Right cardiac atrium (tissue), 5 donors: ENCODE measurements at regions of chr17 and their contacts with region 1.

Region 1: DNA sequence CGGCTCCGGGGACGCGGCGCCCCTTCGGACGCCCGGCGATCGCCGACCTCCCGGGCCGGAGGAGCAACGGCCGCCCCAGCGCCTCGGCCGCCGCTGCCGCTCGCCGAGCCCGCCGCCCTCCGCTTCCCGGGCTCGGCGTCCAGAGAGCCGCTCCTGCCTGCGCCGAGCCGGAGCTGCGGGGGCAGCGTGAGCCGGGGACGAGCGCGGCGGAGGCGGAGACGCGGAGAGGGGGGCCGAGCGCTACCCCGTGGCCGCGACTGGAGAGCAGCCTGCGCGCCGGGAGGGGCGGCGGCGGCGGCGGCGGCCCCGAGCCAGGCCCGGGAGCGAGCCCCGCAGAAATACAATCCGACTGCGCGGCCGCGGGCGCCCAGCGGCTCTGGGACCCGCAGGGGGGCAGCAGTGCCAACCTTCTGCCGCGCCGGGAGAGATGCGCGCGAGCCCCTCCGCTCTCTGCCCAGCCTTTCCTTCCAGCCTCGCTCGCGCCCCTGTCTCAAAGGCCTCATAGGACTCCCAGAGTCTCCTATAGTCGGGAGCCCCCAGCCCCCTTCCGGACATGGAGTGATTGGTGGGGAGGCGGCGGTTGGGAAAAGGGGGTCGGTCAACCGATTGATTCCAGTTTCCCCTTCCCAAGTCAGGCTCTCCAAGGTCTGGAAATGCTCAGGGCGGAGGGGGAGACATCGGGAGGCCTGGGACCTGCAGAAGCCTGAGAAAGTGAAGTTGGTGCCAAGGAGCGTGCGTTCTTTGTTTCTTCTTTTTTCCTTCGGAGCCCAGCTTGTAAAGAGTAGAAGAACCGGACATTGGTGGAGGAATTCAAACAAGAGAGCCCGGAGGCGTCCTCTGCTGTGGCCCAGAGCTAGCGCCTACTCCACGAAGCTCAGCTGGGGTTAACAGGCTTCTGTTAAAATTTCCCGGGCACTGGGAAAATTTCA is 1.1 kb upstream of the SDK2 start:
- DNase-seq: peak; percentile 70 to 85 (median 82)
- ATAC-seq: peak; percentile 75 to 80
- H3K4me3 ChIP-seq: peak overlapping the region; percentile 62
- H3K27ac ChIP-seq: no peak overlapping the region
- H3K4me1 ChIP-seq: no peaks in the 10 kb centered on the region
- H3K27me3 ChIP-seq: no peaks in the 10 kb centered on the region

Region 2: DNA sequence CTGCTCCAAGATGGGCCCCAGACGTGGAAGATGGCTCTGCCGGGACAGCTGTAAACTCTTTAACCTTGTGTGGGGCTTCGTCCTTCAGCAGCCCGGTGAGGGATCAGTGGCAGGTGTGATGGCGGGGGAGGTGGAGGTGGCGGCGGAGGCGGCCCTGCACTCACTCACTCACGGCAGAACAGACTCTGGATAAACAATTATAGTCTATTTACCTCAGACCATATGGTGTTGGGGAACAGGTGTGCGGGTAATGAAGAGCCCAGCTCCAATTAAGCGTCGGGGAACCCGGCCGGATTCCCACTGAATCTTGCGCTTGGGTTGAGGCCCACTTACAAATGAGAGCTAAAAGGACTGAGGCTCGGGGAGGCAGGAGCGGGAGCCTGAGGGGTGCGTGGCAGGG is 103.2 kb after region 1 on chr17:
- intact Hi-C with region 1: no loop called
- DNase-seq: peak in 1 of 3 donors; percentile 19
- ATAC-seq: no peak
- H3K4me3 ChIP-seq: no peak overlapping the region
- H3K27ac ChIP-seq: no peak overlapping the region
- H3K4me1 ChIP-seq: no peaks in the 10 kb centered on the region
- H3K27me3 ChIP-seq: no peaks in the 10 kb centered on the region

Region 3: DNA sequence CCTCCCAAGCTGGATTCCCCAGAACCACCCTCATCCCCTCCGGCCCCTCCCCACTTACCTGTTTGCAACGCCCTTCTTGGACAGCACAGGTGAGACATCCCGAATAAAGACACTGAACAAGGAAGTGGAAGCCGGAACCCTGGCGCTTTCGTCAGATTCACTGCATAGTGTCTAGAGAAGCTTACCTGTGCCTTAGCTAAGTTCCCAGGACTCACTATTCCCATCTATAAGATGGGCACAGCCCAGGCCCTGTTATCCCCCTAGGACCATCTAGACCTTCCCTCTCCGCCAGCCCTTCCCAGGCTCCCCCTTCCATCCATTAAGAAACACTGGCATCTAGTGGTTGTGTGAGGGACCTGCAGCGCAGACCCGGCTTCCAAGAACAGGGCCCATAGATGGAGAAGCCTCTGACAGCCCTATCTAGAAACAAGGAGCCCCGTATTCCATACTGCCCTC is 531.3 kb after region 1 on chr17:
- intact Hi-C with region 1: loop called in 2 of 4 experiments (anchors 10 kb)
- DNase-seq: peak; percentile 37 to 74 (median 73)
- ATAC-seq: peak; percentile 83 to 86
- H3K4me3 ChIP-seq: no peak overlapping the region
- H3K27ac ChIP-seq: no peak overlapping the region
- H3K4me1 ChIP-seq: no peaks in the 10 kb centered on the region
- H3K27me3 ChIP-seq: no peaks in the 10 kb centered on the region

Region 4: DNA sequence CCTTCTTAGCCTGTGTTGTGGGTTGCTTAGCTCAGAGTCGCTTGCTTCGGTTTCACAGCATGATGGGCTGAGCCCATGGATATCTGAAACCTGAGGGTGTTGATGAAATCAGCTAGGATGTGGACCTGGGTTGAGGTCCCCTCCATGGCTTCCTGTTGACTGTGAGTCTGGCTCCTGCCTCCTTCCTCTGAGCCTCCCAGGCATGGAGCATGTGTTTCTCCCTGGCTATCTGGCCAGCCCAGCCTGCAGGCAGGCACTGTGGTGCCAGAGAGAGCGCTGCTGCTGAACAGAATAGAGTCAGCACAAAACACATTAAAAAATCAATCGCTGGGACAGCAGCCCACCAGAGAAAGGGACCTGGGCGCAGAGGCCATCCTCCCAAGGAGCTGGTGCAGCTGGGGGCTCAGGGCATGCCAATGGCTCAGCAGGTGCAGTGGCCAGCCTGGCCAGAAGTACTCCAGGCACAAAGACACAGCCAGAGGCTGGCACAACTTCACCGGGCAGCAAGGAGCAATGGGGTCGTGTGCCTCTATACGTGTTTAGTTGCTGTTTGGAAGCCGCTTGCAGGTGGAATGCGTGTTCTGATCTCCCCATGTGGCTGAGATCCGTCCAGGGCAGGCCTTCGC is 758.3 kb after region 1 on chr17:
- intact Hi-C with region 1: no loop called
- DNase-seq: no peak
- ATAC-seq: no peak
- H3K4me3 ChIP-seq: no peak overlapping the region
- H3K27ac ChIP-seq: no peak overlapping the region
- H3K4me1 ChIP-seq: no peaks in the 10 kb centered on the region
- H3K27me3 ChIP-seq: no peaks in the 10 kb centered on the region